Psoas muscle (tissue), 8 donors: ENCODE measurements at regions of chr1 and their contacts with region 1.

Region 1: GRCh38 chr1:52002038-52002917 is 11.8 kb upstream of the RAB3B start:
- DNase-seq: no peak
- ATAC-seq: peak; percentile 93 to 97 (median 95)
- H3K4me3 ChIP-seq: no peak overlapping the region
- H3K27ac ChIP-seq: no peak overlapping the region
- H3K4me1 ChIP-seq: no peaks in the 10 kb centered on the region
- H3K27me3 ChIP-seq: peaks cover 0 to 6% (median 2%) of the 10 kb centered on the region in 3 donors
- CTCF ChIP-seq: peak; percentile 93

Region 2: DNA sequence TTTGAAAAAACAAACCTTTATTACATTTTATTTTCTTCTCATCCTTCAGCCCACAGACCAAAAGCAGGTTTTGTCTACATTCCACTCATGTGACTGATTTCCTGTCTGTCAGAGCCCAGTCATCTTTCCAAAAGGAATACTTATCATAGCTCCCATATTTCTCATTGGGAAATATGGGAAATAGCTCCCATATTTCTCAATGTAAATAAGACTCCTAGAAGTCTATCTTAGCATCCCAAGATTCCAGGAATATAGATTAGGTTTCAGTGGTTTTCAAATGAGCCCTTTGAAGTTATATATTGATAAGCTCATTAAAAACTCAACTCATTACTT is 104.6 kb before region 1 on chr1:
- intact Hi-C with region 1: loop called (anchors 1 to 5 kb)
- DNase-seq: no peak
- ATAC-seq: no peak
- H3K4me3 ChIP-seq: no peak overlapping the region
- H3K27ac ChIP-seq: no peak overlapping the region
- H3K4me1 ChIP-seq: no peaks in the 10 kb centered on the region
- H3K27me3 ChIP-seq: peaks cover 0 to 47% (median 3%) of the 10 kb centered on the region in 3 donors
- CTCF ChIP-seq: no peak

Region 3: GRCh38 chr1:52033190-52034049 is 31.1 kb after region 1 on chr1 and contains the start of gene KTI12:
- intact Hi-C with region 1: no loop called
- DNase-seq: peak; percentile 89 to 94
- ATAC-seq: peak; percentile 89 to 95 (median 92)
- H3K4me3 ChIP-seq: peak within 1 kb of the TSS; percentile 92
- H3K27ac ChIP-seq: peak within 1 kb of the TSS; percentile 93
- H3K4me1 ChIP-seq: peaks cover 19% of the 10 kb centered on the region
- H3K27me3 ChIP-seq: no peaks in the 10 kb centered on the region
- CTCF ChIP-seq: no peak
- total RNA-seq, gene KTI12: 2.3 to 5.3 (median 4.4) TPM